Aorta (tissue), 5 donors: ENCODE measurements at regions of chr2 and their contacts with region 1.

Region 1: GRCh38 chr2:198657512-198658121 is 800.1 kb downstream of the SATB2 start:
- DNase-seq: peak in 1 of 2 donors; percentile 46
- ATAC-seq: no peak
- H3K4me3 ChIP-seq: no peak overlapping the region
- H3K27ac ChIP-seq: no peak overlapping the region
- H3K4me1 ChIP-seq: no peaks in the 10 kb centered on the region
- H3K27me3 ChIP-seq: no peaks in the 10 kb centered on the region

Region 2: GRCh38 chr2:198135481-198135934 is 522.1 kb before region 1 on chr2:
- intact Hi-C with region 1: loop called in 1 of 2 experiments (anchors 10 kb)
- DNase-seq: no peak
- ATAC-seq: no peak
- H3K4me3 ChIP-seq: no peak overlapping the region
- H3K27ac ChIP-seq: no peak overlapping the region
- H3K4me1 ChIP-seq: no peaks in the 10 kb centered on the region
- H3K27me3 ChIP-seq: no peaks in the 10 kb centered on the region

Region 3: DNA sequence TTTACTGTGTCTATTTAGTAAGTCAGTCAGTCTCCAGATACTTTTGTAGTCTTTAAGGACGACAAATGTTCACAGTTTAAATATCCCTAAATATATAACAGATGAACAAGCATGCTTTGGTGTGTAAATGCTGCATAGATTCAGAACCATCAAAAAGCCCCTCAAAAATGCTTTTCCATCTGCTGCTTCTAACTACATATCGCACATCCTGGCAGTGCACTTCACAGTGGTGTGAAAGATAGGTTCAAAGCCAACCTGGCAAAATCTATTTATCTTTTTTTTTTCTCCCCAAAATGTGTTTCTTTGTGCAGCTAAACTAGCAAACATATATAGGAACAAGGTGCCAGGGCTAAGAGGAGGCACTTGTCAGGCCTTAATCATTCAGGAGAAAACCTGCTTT is 99.4 kb before region 1 on chr2:
- intact Hi-C with region 1: no loop called
- DNase-seq: no peak
- ATAC-seq: no peak
- H3K4me3 ChIP-seq: no peak overlapping the region
- H3K27ac ChIP-seq: no peak overlapping the region
- H3K4me1 ChIP-seq: no peaks in the 10 kb centered on the region
- H3K27me3 ChIP-seq: no peaks in the 10 kb centered on the region